Calu3 (cell line): ENCODE measurements at regions of chr1 and their contacts with region 1.

Region 1: DNA sequence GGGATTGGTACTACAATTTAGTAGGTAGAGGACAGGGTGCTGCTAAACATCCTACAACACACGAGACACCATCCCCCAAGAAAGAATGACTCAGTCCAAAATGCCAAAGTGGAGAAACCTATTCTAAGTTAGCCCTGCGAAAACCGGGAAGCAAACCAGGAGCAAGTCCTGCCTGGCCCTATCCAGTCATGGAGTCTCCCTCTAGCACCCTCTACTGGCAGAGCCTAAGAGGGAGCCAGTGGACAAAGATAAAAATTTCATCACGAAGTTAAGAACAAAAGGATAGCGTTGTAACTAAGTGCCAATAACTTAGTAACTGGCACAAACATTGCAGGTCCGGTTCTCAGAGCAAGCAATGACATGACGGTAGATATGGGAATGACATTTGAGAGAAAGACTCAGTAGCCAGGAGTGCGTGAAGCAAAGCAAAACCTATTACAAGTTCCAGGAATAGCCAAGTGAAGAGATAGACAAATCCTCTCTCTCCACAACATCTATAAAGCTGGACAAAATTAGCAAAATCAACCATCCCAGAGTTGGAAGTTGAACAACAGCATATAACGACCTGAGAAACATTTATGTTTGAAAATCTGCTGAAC is 383.5 kb downstream of the OMA1 start:
- DNase-seq: peak; percentile 81
- H3K4me3 Mint-ChIP-seq: no peak overlapping the region
- H3K27ac Mint-ChIP-seq: peak overlapping the region; percentile 8
- H3K4me1 Mint-ChIP-seq: peaks cover 8% of the 10 kb centered on the region
- H3K27me3 Mint-ChIP-seq: peaks cover under 1% of the 10 kb centered on the region
- CTCF ChIP-seq: peak; percentile 76

Region 2: GRCh38 chr1:56831871-56832693 is 1331.0 kb before region 1 on chr1:
- CTCF ChIA-PET with region 1: no interaction called
- intact Hi-C with region 1: loop called (anchors 5 kb)
- DNase-seq: peak; percentile 77
- H3K4me3 Mint-ChIP-seq: no peak overlapping the region
- H3K27ac Mint-ChIP-seq: no peak overlapping the region
- H3K4me1 Mint-ChIP-seq: no peaks in the 10 kb centered on the region
- H3K27me3 Mint-ChIP-seq: peaks cover 42% of the 10 kb centered on the region
- CTCF ChIP-seq: peak; percentile 91

Region 3: DNA sequence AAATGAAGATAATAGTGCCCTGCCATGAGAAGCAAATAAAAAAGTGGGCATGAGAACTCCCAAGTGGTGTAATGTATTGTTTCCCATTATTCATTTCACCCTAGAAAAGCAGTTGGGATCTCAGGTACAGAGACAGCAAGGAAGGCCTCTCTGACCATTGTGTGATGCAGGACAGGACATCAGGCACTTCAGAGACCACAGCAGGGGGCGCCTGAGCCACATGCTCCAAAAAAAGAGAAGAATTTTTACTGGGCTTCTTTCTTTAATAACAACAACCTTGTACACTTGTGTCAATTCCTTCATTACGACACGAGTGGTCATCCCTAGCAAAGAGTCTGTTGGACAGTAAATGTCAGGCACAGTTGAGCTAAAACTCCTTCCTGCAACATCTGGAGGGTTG is 149.8 kb before region 1 on chr1:
- CTCF ChIA-PET with region 1: no interaction called
- intact Hi-C with region 1: loop called (anchors 1 kb)
- DNase-seq: peak; percentile 49
- H3K4me3 Mint-ChIP-seq: no peak overlapping the region
- H3K27ac Mint-ChIP-seq: no peak overlapping the region
- H3K4me1 Mint-ChIP-seq: no peaks in the 10 kb centered on the region
- H3K27me3 Mint-ChIP-seq: no peaks in the 10 kb centered on the region
- CTCF ChIP-seq: peak; percentile 49

Region 4: GRCh38 chr1:58067082-58067481 is 96.0 kb before region 1 on chr1:
- CTCF ChIA-PET with region 1: no interaction called
- intact Hi-C with region 1: loop called (anchors 2 kb)
- DNase-seq: peak; percentile 76
- H3K4me3 Mint-ChIP-seq: peak overlapping the region; percentile 4
- H3K27ac Mint-ChIP-seq: peak overlapping the region; percentile 86
- H3K4me1 Mint-ChIP-seq: peaks cover 33% of the 10 kb centered on the region
- H3K27me3 Mint-ChIP-seq: no peaks in the 10 kb centered on the region
- CTCF ChIP-seq: no peak